WTC11 (cell line): ENCODE measurements at regions of chr12 and their contacts with region 1.

Region 1: GRCh38 chr12:48903982-48904411 is 21.3 kb downstream of the FKBP11 start:
- DNase-seq: peak; percentile 92
- ATAC-seq: peak; percentile 100
- H3K4me3 Mint-ChIP-seq: peak overlapping the region; percentile 65
- H3K27ac Mint-ChIP-seq: no peak overlapping the region
- H3K4me1 Mint-ChIP-seq: 0 out of 2 replicates have a peak, but pooled peaks cover 3% of the 10 kb centered on the region
- H3K27me3 Mint-ChIP-seq: peaks cover 14% of the 10 kb centered on the region
- CTCF ChIP-seq: peak; percentile 45; the same call in 1 of the 2 replicates

Region 2: DNA sequence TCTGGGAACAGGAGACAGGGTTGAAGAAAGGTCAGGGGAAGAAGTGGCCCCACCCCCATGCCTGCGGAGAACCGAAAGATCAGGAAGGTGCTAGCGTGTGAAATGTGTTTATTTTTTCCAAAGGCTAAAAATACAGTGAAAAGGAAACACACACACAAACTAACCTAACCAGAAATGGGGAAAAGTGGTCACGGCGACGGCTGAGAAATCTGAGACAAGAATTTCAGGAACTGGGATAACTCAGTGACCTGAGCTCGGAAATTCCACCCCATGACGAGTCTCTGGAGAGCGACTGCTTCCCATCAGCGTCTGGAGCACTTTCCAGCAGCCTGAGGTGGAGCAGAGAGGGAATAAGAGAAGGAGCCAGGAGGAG is 21.7 kb before region 1 on chr12:
- CTCF ChIA-PET with region 1: interaction called, 42 read pairs
- POLR2A ChIA-PET with region 1: no interaction called
- DNase-seq: peak; percentile 26
- ATAC-seq: peak; percentile 50
- H3K4me3 Mint-ChIP-seq: peak overlapping the region; percentile 50
- H3K27ac Mint-ChIP-seq: peak overlapping the region; percentile 56
- H3K4me1 Mint-ChIP-seq: peaks cover 33% of the 10 kb centered on the region
- H3K27me3 Mint-ChIP-seq: peaks cover 7% of the 10 kb centered on the region
- CTCF ChIP-seq: no peak

Region 3: DNA sequence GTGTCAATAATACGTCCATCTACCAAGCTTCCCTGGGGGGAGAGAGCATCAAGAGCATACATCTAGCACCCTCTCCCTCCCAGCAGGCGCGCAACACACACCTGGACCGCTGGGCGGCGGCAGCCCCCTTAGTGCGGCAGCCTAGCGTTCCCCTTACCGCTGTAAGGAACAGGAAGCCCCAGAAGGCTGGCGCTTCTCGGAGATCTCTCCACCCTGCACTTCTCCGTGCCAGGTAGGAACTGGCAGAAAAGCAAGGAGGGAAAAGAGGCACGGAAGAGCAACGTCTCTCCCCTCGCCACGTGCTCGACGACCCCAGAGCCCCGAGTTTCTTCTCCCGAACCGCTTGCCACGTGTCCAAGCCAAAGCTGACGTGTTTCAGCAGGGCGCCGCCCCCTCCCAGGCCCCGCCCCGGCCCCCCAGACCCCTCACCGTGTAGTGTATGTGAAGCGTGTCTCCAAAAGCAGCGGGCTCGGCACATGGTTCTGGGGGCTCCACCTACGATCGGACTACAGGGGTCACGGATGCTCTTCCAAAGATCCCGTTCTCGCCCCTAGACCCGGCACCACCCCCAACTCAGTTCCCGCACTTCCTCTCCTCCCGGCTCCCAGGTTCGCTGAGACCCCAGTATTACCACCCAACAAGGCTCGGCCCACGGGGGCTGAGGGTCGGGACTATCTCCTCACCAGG is 20.8 kb after region 1 on chr12:
- CTCF ChIA-PET with region 1: interaction called, 43 read pairs
- POLR2A ChIA-PET with region 1: no interaction called
- DNase-seq: peak; percentile 69
- ATAC-seq: peak; percentile 69
- H3K4me3 Mint-ChIP-seq: peak overlapping the region; percentile 82
- H3K27ac Mint-ChIP-seq: peak overlapping the region; percentile 80
- H3K4me1 Mint-ChIP-seq: peaks cover 15% of the 10 kb centered on the region
- H3K27me3 Mint-ChIP-seq: no peaks in the 10 kb centered on the region; the same call in 1 of the 2 replicates
- CTCF ChIP-seq: 0 out of 2 replicates have a peak, but pooled peaks have one; percentile 15

Region 4: DNA sequence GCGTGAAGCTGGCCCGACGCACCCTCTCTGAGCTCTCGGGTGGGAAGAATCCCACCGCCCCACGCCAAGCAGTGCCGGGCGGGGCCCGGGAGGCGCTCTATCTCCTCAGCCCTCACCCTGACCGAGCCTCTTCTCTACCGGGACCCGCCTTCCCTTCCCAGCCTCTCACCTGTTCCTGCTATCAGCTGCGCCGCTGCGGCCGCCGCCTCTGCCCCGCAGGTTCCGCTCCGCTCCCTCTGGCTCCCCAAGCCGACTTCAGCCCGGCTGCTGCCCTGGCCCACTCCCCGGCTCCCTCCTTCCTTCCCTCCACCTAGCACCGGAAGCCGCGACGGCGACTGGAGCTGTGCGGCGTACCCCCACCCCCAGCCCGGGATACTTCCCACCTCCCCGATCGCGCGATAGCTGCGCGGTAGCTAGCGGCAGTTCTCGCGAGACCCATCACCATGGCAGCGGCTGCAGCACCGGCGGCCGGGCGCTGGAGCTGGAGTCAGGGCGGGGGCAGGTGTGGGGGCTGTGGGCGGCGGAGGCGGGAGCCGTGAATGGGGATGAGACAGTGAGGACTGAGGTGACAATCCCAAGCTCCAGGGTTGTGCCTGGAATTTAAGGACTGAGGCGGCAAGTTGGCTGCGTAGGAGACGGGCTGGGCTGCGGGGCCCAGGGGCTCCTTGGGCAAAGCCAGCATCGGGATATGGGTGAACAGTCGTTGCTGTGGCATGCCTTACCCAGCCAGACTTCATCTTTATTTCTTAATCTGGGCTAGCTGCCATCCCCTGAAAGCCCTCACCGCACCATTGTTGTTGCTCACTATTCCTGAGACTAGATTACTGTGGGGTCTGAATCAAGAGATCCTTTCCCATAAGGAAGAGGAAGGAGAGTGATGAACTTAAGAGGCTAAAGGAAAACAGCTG is 53.4 kb after region 1 on chr12 and contains the start of gene ARF3:
- CTCF ChIA-PET with region 1: interaction called, 21 read pairs
- POLR2A ChIA-PET with region 1: no interaction called
- DNase-seq: peak; percentile 98
- ATAC-seq: peak; percentile 89
- H3K4me3 Mint-ChIP-seq: peak within 1 kb of the TSS; percentile 95
- H3K27ac Mint-ChIP-seq: peak within 1 kb of the TSS; percentile 97
- H3K4me1 Mint-ChIP-seq: peaks cover 31% of the 10 kb centered on the region
- H3K27me3 Mint-ChIP-seq: peaks cover 7% of the 10 kb centered on the region; the same call in 1 of the 2 replicates
- CTCF ChIP-seq: no peak
- total RNA-seq, gene ARF3: 238 to 256 TPM (median 248 TPM) in 3 replicates

Region 5: GRCh38 chr12:48977315-48978281 is 73.6 kb after region 1 on chr12:
- CTCF ChIA-PET with region 1: interaction called, 13 read pairs
- POLR2A ChIA-PET with region 1: no interaction called
- DNase-seq: peak; percentile 75
- ATAC-seq: peak; percentile 3
- H3K4me3 Mint-ChIP-seq: peak overlapping the region; percentile 45
- H3K27ac Mint-ChIP-seq: no peak overlapping the region
- H3K4me1 Mint-ChIP-seq: peaks cover 31% of the 10 kb centered on the region
- H3K27me3 Mint-ChIP-seq: peaks cover 100% of the 10 kb centered on the region
- CTCF ChIP-seq: peak; percentile 77; the same call in 1 of the 2 replicates